ENCODE measurements at regions of chr20 and their contacts with region 1.

Region 1: DNA sequence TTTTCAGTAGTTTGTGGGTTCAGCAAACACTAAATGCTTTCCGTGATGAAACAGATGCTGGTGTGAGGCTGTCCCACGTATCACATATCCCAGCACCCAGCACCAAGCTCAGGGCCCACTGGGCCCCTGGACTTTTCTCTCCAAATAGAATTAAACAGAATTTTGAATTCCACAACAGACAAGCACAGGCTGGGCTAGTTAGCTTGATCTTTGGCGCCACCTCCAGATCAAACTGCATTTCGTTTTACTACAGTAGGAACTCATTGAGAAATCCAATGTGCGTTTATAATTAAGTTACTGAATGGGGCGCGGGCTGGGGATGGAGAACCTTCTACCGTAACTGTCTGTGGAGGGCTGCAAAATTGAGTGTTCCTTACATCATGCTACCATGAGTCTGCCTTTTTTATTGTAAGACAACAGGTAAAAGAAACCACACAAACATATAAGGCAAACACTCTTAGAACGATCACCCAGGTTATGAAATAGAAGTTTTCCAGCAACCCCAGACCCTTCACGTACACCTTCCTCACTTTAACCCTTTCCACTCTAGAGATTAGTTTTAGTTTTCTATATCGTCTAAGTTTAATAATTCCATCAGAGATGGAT is 107.8 kb downstream of the ZFP64 start:
- DNase-seq: peak; percentile 75
- ATAC-seq: peak; percentile 92
- H3K4me3 ChIP-seq: no peak overlapping the region
- H3K27ac ChIP-seq: no peak overlapping the region
- H3K4me1 ChIP-seq: no peaks in the 10 kb centered on the region
- H3K27me3 ChIP-seq: no peaks in the 10 kb centered on the region
- CTCF ChIP-seq: peak; percentile 88
- POLR2A ChIP-seq: 0 out of 2 replicates have a peak, but pooled peaks have one; percentile 36
- RAD21 ChIP-seq: peak; percentile 98

Region 2: DNA sequence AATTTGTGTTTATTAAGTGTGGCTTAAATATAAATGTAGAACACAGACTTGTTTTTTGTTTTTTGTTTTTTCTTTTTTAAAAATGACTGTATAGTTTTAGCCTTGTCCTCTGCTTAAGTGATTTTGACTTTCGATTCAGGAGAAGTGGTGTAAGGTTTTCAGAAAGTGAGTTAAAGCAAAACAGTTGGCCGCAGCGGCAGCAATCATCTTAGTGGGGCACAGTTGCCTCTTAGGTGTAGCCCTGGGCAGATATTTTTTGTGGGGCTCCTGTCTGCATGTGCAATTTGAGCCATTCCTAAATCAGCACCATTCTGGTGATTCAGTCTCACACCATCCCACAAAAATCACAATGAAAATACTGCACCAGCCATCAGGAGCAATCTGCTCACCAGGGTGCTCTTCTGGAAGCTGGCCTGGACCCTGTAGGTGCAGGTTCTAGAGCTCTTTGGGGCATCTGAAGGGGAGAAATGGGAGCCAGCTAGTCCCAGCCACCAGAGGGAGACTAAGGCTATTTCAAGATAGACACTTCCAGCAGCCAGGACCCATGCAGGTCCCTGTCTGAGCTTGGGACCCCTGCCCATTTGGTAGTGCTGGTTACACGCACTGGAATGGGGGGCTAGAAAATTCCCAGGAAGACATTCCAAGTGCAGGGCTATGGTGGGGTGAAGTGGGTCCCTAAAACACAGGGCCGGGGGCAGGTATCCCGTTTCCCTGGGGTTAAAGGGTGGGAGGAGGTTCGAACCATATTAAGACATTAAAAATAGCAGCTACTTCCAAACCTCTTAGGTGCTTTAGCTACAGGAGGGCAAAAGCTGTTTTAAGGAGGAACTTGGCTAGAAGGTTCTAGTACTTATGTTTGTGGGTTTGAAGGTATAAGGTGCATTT is 697.8 kb before region 1 on chr20:
- CTCF ChIA-PET with region 1: no interaction called
- POLR2A ChIA-PET with region 1: no interaction called
- dilution Hi-C with region 1: no loop called
- in situ Hi-C with region 1: no loop called
- intact Hi-C with region 1: loop called (anchors 5 kb)
- DNase-seq: peak; percentile 41
- ATAC-seq: peak; percentile 49; the same call in 1 of the 2 replicates
- H3K4me3 ChIP-seq: no peak overlapping the region
- H3K27ac ChIP-seq: no peak overlapping the region
- H3K4me1 ChIP-seq: peaks cover 12% of the 10 kb centered on the region
- H3K27me3 ChIP-seq: no peaks in the 10 kb centered on the region
- CTCF ChIP-seq: peak; percentile 56
- POLR2A ChIP-seq: no peak
- RAD21 ChIP-seq: peak; percentile 58

Region 3: GRCh38 chr20:51703400-51704287 is 380.1 kb before region 1 on chr20:
- CTCF ChIA-PET with region 1: no interaction called
- POLR2A ChIA-PET with region 1: no interaction called
- dilution Hi-C with region 1: no loop called
- in situ Hi-C with region 1: loop called (anchors 10 kb)
- intact Hi-C with region 1: loop called (anchors 5 kb)
- DNase-seq: no peak
- ATAC-seq: no peak
- H3K4me3 ChIP-seq: no peak overlapping the region
- H3K27ac ChIP-seq: no peak overlapping the region
- H3K4me1 ChIP-seq: peaks cover 3% of the 10 kb centered on the region
- H3K27me3 ChIP-seq: no peaks in the 10 kb centered on the region
- CTCF ChIP-seq: no peak
- POLR2A ChIP-seq: no peak
- RAD21 ChIP-seq: no peak

Region 4: GRCh38 chr20:51800060-51800794 is 283.5 kb before region 1 on chr20:
- CTCF ChIA-PET with region 1: no interaction called
- POLR2A ChIA-PET with region 1: no interaction called
- dilution Hi-C with region 1: no loop called
- in situ Hi-C with region 1: loop called (anchors 10 kb)
- intact Hi-C with region 1: loop called (anchors 1 kb)
- DNase-seq: no peak
- ATAC-seq: peak; percentile 69
- H3K4me3 ChIP-seq: peak overlapping the region; percentile 40
- H3K27ac ChIP-seq: no peak overlapping the region
- H3K4me1 ChIP-seq: peaks cover 5% of the 10 kb centered on the region; the same call in 1 of the 2 replicates
- H3K27me3 ChIP-seq: peaks cover 25% of the 10 kb centered on the region
- CTCF ChIP-seq: peak; percentile 64
- POLR2A ChIP-seq: no peak
- RAD21 ChIP-seq: peak; percentile 58

Region 5: DNA sequence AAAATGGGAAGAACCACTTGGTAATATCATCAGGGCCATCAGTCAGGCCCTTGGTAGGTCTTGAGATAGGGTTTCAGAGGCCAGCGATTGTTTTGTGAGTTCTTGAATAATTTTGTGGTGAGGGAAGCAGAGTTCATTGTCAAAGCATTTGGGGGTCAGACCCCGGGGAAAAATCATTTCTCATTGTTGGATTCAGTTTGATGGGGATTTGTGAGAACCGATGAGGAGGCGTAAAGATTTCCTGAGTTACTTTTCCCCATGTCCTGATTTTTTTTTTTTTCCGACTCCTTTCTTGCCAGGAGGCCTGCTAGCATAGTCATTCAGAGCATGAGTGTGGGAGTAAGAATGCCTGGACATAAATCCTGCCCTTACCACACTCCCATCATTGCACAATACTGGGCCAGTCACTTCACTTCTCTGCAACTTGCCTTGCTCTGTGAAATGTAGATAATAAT is 948.8 kb after region 1 on chr20:
- CTCF ChIA-PET with region 1: no interaction called
- POLR2A ChIA-PET with region 1: no interaction called
- dilution Hi-C with region 1: no loop called
- in situ Hi-C with region 1: no loop called
- intact Hi-C with region 1: no loop called
- DNase-seq: peak; percentile 25
- ATAC-seq: no peak
- H3K4me3 ChIP-seq: no peak overlapping the region
- H3K27ac ChIP-seq: no peak overlapping the region
- H3K4me1 ChIP-seq: no peaks in the 10 kb centered on the region
- H3K27me3 ChIP-seq: no peaks in the 10 kb centered on the region
- CTCF ChIP-seq: no peak
- POLR2A ChIP-seq: no peak
- RAD21 ChIP-seq: no peak